ENCODE measurements at regions of chr14 and their contacts with region 1.

Region 1: GRCh38 chr14:96741151-96741977 is 55.8 kb upstream of the VRK1 start:
- DNase-seq: peak; percentile 94
- H3K4me3 Mint-ChIP-seq: peak overlapping the region; percentile 73
- H3K27ac Mint-ChIP-seq: no peak overlapping the region
- H3K4me1 Mint-ChIP-seq: peaks cover 2% of the 10 kb centered on the region
- H3K27me3 Mint-ChIP-seq: peaks cover 73% of the 10 kb centered on the region

Region 2: DNA sequence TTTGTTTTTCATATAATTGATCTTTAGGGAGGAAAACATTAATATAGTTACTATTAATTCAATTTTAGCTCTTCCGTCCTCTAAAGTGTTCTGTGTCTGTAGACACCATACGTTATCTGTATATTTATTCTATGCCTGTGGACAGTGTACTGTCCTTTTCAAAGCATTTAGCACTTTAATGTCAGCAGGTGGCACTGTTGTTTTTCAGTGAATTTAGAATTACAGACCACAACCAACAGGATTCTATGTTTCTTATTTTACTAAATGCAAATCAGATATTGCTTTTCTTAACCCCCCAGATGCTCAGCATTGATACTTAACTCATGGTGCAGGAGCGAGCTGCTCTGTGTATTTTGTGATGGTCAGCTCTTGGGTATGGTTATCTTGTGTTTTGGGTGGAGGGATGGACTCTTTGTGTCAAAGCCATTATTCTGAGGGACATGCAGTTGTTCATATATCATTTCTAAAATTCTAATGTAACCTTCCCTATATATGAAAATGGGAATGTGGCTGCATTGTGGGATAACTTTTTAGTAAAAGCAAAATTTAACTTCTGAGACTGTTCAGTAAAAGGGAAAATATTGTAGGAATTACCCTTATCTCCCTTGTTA is 174.0 kb before region 1 on chr14:
- intact Hi-C with region 1: loop called (anchors 5 kb)
- DNase-seq: peak; percentile 70
- H3K4me3 Mint-ChIP-seq: no peak overlapping the region
- H3K27ac Mint-ChIP-seq: no peak overlapping the region
- H3K4me1 Mint-ChIP-seq: peaks cover 5% of the 10 kb centered on the region
- H3K27me3 Mint-ChIP-seq: no peaks in the 10 kb centered on the region

Region 3: GRCh38 chr14:96592591-96593386 is 148.6 kb before region 1 on chr14:
- intact Hi-C with region 1: loop called (anchors 5 kb)
- DNase-seq: peak; percentile 92
- H3K4me3 Mint-ChIP-seq: peak overlapping the region; percentile 77
- H3K27ac Mint-ChIP-seq: peak overlapping the region; percentile 16
- H3K4me1 Mint-ChIP-seq: peaks cover 9% of the 10 kb centered on the region
- H3K27me3 Mint-ChIP-seq: peaks cover 15% of the 10 kb centered on the region

Region 4: GRCh38 chr14:96662116-96662970 is 79.0 kb before region 1 on chr14:
- intact Hi-C with region 1: no loop called
- DNase-seq: no peak
- H3K4me3 Mint-ChIP-seq: no peak overlapping the region
- H3K27ac Mint-ChIP-seq: no peak overlapping the region
- H3K4me1 Mint-ChIP-seq: no peaks in the 10 kb centered on the region
- H3K27me3 Mint-ChIP-seq: peaks cover 36% of the 10 kb centered on the region

Region 5: DNA sequence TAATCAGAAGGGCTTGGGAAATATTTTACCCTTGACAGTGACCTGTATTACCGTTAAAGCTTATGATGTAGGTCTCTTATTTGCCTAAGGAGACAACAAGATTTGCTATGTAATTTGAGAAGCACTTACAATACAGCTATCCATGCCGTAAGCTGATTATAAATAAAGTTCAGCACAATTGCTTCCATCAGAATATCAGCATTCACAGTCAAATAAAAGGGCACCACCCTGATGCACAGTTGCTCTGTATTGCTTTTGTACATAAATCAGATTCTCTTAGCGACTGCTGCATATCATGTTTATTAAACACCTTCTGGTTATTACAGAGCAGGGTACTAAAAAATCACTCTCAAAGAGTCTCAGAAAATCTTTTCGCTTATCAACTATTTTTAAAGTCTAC is 11.5 kb before region 1 on chr14:
- intact Hi-C with region 1: no loop called
- DNase-seq: no peak
- H3K4me3 Mint-ChIP-seq: no peak overlapping the region
- H3K27ac Mint-ChIP-seq: no peak overlapping the region
- H3K4me1 Mint-ChIP-seq: no peaks in the 10 kb centered on the region
- H3K27me3 Mint-ChIP-seq: peaks cover 15% of the 10 kb centered on the region

Region 6: GRCh38 chr14:97156698-97157097 is 415.3 kb after region 1 on chr14:
- intact Hi-C with region 1: no loop called
- DNase-seq: no peak
- H3K4me3 Mint-ChIP-seq: no peak overlapping the region
- H3K27ac Mint-ChIP-seq: no peak overlapping the region
- H3K4me1 Mint-ChIP-seq: no peaks in the 10 kb centered on the region
- H3K27me3 Mint-ChIP-seq: peaks cover 13% of the 10 kb centered on the region

Measured in activated CD4-positive, alpha-beta T cell treated with anti-CD3 and anti-CD28 coated beads, Interleukin-2, amount 10 ng/mL, durations not matched to agents 24 days and 14 days (primary cell).